Activated B cell treated with CpG ODN at 0.5 μM for 24 hours (primary cell): ENCODE measurements at regions of chr6 and their contacts with region 1.

Region 1: DNA sequence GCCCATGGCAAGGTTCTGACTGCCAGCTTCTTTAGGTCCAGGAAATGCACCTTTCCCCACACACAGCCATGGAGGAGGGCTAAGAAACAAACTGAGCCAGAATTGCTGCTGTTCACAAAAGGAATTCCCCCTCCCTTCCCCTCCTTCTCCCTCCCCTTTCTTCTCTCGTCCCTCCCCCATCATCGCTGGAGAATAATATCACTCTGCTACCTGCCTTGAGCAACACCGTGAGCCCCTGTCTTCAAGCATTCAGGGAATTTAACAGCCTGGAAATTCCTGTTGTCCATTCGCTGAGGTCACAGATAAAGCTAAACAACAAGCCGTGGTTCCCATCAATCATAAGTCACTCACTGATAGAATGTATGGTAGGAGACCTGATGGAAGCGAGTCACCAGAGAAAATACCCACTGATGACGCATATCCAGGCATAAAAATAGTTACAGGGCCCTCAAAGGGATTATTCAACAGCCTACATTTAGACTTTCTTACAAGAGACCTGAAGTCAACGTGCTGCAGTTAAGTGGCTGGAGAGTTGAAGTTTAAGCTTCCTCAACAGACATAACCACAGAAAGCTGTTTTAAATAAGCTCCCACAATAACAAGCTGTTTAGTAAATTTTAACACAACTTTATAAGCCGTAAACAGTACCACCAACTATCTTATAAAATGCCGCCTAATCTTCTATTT is 59.7 kb downstream of the HIVEP2 start:
- DNase-seq: peak; percentile 28
- ATAC-seq: peak; percentile 83
- H3K4me3 Mint-ChIP-seq: peak overlapping the region; percentile 98
- H3K27ac Mint-ChIP-seq: peak overlapping the region; percentile 99
- H3K4me1 Mint-ChIP-seq: peaks cover 86% of the 10 kb centered on the region
- H3K27me3 Mint-ChIP-seq: no peaks in the 10 kb centered on the region
- CTCF ChIP-seq: no peak

Region 2: GRCh38 chr6:142246960-142247359 is 638.4 kb before region 1 on chr6:
- CTCF ChIA-PET with region 1: no interaction called
- POLR2A ChIA-PET with region 1: no interaction called
- intact Hi-C with region 1: no loop called
- DNase-seq: no peak
- ATAC-seq: no peak
- H3K4me3 Mint-ChIP-seq: no peak overlapping the region
- H3K27ac Mint-ChIP-seq: no peak overlapping the region
- H3K4me1 Mint-ChIP-seq: no peaks in the 10 kb centered on the region
- H3K27me3 Mint-ChIP-seq: peaks cover 7% of the 10 kb centered on the region
- CTCF ChIP-seq: no peak

Region 3: GRCh38 chr6:142692942-142693341 is 192.4 kb before region 1 on chr6:
- CTCF ChIA-PET with region 1: interaction called, 6 read pairs
- POLR2A ChIA-PET with region 1: no interaction called
- intact Hi-C with region 1: loop called (anchors 1 kb)
- DNase-seq: peak; percentile 42
- ATAC-seq: peak; percentile 89
- H3K4me3 Mint-ChIP-seq: no peak overlapping the region
- H3K27ac Mint-ChIP-seq: no peak overlapping the region
- H3K4me1 Mint-ChIP-seq: peaks cover 6% of the 10 kb centered on the region
- H3K27me3 Mint-ChIP-seq: no peaks in the 10 kb centered on the region
- CTCF ChIP-seq: peak; percentile 18

Region 4: GRCh38 chr6:142784344-142784743 is 101.0 kb before region 1 on chr6:
- CTCF ChIA-PET with region 1: no interaction called
- POLR2A ChIA-PET with region 1: interaction called, 4 read pairs
- intact Hi-C with region 1: loop called (anchors 1 kb)
- DNase-seq: no peak
- ATAC-seq: peak; percentile 98
- H3K4me3 Mint-ChIP-seq: peak overlapping the region; percentile 15
- H3K27ac Mint-ChIP-seq: peak overlapping the region; percentile 78
- H3K4me1 Mint-ChIP-seq: peaks cover 34% of the 10 kb centered on the region
- H3K27me3 Mint-ChIP-seq: no peaks in the 10 kb centered on the region
- CTCF ChIP-seq: no peak

Region 5: DNA sequence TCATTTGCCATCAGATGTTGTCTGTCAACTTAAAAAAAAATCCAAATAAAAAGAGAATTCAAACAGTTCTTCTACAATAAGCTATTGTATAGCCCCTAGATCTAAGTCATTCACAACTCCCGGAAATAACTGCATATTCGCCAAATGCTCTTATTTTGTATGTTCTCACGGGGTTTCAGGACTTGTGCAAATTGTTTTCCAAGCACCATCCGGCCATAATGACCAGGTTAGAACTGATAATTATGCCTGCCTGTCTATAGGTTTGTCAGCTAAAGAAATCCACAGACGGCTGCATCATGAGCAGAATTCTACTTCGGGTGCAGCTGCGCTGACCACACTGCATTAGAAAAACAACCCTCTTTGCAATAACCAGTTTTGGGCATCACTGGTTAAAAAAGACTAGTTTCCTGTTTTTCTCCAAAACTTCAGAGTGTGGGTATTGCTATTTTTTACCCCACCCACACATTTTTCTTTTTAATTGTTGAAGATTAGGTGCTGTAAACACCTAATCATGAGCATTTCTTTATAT is 28.0 kb before region 1 on chr6:
- CTCF ChIA-PET with region 1: interaction called, 3 read pairs
- POLR2A ChIA-PET with region 1: interaction called, 31 read pairs
- intact Hi-C with region 1: loop called (anchors 1 kb)
- DNase-seq: no peak
- ATAC-seq: peak; percentile 26
- H3K4me3 Mint-ChIP-seq: peak overlapping the region; percentile 73
- H3K27ac Mint-ChIP-seq: peak overlapping the region; percentile 95
- H3K4me1 Mint-ChIP-seq: peaks cover 90% of the 10 kb centered on the region
- H3K27me3 Mint-ChIP-seq: no peaks in the 10 kb centered on the region
- CTCF ChIP-seq: no peak

Region 6: DNA sequence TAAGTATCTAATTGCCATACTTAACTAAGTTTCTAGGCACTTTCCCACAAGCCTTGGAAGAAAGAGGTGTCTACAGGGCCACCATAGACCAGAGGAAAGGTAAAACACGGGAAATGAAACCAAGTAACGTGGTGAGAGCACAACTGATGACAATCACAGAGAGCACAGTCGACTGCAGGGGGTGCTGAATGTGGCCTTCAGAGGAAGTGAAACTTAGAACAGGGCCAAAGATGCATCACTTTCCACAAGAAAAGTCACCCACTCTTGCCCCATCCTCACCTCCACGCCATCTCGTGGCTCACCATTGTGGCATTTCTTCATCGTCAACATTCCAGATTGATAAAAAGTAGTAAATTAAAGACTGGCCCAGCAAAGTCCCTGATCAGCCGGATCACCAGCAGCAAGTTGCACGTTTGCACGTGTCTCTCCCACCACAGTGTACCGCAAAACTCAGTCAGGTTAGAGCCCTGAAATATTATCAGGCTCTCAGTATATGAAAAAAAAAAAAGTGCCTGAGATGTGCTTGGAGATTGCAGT is 28.3 kb after region 1 on chr6:
- CTCF ChIA-PET with region 1: interaction called, 4 read pairs
- POLR2A ChIA-PET with region 1: interaction called, 10 read pairs
- intact Hi-C with region 1: loop called (anchors 1 kb)
- DNase-seq: peak; percentile 52
- ATAC-seq: peak; percentile 93
- H3K4me3 Mint-ChIP-seq: peak overlapping the region; percentile 78
- H3K27ac Mint-ChIP-seq: peak overlapping the region; percentile 98
- H3K4me1 Mint-ChIP-seq: peaks cover 52% of the 10 kb centered on the region
- H3K27me3 Mint-ChIP-seq: no peaks in the 10 kb centered on the region
- CTCF ChIP-seq: no peak

Region 7: GRCh38 chr6:142985281-142985680 is 100.0 kb after region 1 on chr6:
- CTCF ChIA-PET with region 1: no interaction called
- POLR2A ChIA-PET with region 1: no interaction called
- intact Hi-C with region 1: no loop called
- DNase-seq: no peak
- ATAC-seq: no peak
- H3K4me3 Mint-ChIP-seq: no peak overlapping the region
- H3K27ac Mint-ChIP-seq: no peak overlapping the region
- H3K4me1 Mint-ChIP-seq: peaks cover 1% of the 10 kb centered on the region
- H3K27me3 Mint-ChIP-seq: peaks cover 3% of the 10 kb centered on the region
- CTCF ChIP-seq: no peak

Region 8: GRCh38 chr6:143450453-143451371 is 565.4 kb after region 1 on chr6 and contains the starts of genes ADAT2 and PEX3:
- CTCF ChIA-PET with region 1: no interaction called
- POLR2A ChIA-PET with region 1: no interaction called
- intact Hi-C with region 1: loop called (anchors 1 kb)
- DNase-seq: peak; percentile 90
- ATAC-seq: peak; percentile 91
- H3K4me3 Mint-ChIP-seq: peak within 1 kb of the TSS; percentile 98
- H3K27ac Mint-ChIP-seq: peak within 1 kb of the TSS; percentile 96
- H3K4me1 Mint-ChIP-seq: peaks cover 39% of the 10 kb centered on the region
- H3K27me3 Mint-ChIP-seq: no peaks in the 10 kb centered on the region
- CTCF ChIP-seq: no peak
- total RNA-seq, gene ADAT2: 22.4 and 30.2 TPM in 2 replicates
- total RNA-seq, gene PEX3: 21.7 and 26.5 TPM in 2 replicates